AG04449 (cell line): ENCODE measurements at regions of chr15 and their contacts with region 1.

Region 1: DNA sequence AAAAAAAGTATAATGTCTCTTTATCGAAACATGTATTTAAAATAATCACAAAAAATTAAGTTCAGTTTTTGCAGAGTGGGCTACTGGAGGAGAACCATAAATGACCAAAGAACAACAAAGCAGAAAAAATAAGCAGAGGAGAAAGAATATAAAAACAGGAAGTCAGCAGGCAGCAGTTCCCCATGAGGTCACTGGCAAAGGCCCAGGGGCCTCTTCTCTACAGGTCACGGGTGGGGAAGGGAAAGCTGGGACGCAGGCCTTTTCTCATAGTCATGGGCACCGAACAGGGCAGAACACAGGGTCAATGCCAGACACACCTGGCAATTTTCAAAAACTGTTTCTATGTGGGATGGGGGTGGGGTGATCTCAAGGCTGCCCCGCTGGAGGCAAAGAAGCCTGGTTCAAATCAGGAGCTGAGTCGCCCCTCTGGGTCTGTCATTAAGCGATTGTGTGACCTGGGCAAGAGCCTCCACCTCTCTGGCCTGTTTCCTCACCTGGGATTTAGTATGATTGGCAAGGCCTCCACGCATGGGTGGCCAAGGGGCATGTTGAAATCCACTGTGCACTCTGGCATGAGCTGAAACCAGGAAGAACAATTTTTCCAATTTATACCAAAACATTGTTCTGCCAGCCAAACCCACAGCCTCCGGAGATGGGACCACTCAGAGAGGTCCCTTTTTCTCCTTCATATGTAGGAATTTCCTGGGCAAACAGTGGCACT is 43.8 kb upstream of the UACA start:
- DNase-seq: no peak
- H3K4me3 ChIP-seq: no peak overlapping the region
- CTCF ChIP-seq: no peak

Region 2: DNA sequence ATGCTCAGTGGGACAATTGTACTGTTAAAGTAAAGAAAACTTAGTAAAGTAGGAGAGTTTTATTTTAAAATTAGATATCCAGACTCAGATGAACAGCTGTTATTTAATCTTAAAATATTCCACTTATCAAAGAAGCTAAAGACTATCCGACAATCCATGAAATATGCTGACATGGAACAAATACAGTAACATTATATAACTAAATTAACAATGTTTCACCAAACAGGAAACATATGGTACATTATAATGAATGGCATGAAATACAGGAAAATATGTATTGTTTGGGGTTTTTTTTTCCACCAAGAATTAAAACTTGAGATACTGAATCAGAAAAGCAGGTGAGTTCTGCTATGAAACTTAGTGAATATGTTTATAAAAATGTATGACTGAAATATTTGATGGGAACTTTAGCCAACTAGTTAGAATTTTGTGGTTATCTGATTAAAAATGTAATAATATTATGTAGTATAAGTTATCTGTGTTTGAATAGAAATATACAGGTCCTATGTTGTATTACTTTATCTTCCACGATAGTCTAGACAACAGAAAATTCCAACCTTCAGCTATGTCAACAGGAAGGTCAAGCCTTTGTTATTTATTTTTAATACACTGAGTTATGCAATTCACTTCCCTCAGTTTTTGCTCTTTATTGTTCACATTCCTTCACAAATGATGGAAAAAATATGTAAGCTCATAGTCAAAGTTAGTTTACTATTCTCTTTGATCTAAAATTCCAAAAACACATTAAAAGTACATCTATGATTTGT is 116.5 kb before region 1 on chr15:
- CTCF ChIA-PET with region 1: interaction called, 27 read pairs
- POLR2A ChIA-PET with region 1: no interaction called
- DNase-seq: no peak
- H3K4me3 ChIP-seq: no peak overlapping the region
- CTCF ChIP-seq: no peak

Region 3: DNA sequence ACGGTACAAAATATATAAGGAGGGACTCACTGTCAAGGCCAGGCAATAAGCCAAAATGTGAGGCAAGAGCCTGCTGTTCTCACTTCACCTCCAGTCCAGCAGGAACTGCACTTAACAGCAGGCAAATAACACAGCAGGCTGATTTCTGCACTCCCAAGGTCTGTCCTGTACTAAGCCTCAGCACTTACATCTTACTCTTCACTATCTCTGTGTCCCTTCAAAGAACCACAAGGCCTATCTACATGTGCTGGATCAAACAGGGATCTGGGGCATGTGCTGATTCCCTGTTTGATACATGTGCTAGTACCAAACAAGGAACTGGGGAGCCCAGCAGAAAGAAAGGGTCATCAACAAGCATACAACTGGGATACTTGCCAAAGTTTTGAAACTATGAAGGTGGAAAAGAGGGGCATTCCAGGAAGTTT is 66.0 kb before region 1 on chr15:
- CTCF ChIA-PET with region 1: interaction called, 10 read pairs
- POLR2A ChIA-PET with region 1: no interaction called
- DNase-seq: peak; percentile 63
- H3K4me3 ChIP-seq: no peak overlapping the region
- CTCF ChIP-seq: no peak

Region 4: GRCh38 chr15:70762469-70763119 is 44.6 kb before region 1 on chr15:
- CTCF ChIA-PET with region 1: interaction called, 34 read pairs
- POLR2A ChIA-PET with region 1: no interaction called
- DNase-seq: no peak
- H3K4me3 ChIP-seq: peak overlapping the region; percentile 77
- CTCF ChIP-seq: no peak

Region 5: GRCh38 chr15:70833897-70834765 is 27.0 kb after region 1 on chr15:
- CTCF ChIA-PET with region 1: interaction called, 27 read pairs
- POLR2A ChIA-PET with region 1: no interaction called
- DNase-seq: no peak
- H3K4me3 ChIP-seq: no peak overlapping the region
- CTCF ChIP-seq: no peak

Region 6: DNA sequence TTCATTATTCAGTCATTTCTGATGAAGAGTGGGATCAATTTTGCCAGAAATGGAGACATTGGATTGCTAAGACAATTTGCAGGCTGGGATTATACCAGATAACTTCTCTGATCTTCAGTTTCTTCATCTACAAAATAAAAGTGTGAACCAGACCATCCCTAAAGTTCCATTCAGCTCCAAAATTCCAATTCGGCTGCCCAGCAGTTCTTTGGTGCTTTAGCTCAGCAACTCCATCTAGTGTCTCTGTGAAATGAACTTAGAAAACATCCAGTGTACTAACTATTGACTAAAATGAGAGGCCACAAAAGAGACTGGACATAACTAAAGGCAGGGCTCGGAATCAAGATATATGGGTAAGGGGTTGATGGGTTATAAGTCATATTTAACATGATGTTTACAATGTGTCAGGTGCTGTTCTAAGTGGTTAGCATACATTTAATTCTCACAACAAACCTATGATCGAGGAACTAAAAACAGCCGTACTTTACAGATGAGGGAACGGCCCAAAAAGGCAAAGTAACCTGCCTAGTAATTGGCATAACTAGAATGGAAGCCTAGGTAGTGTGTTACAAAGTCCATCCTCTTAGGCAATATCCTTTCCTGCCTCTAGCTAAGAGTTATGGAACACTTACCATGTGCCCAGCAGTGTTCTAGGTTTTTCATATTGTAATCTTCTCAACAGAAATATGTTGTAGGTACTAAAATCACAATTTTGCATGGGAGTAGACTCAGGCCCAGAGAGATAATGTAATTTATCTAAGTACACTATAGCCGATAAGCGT is 68.0 kb after region 1 on chr15:
- CTCF ChIA-PET with region 1: interaction called, 24 read pairs
- POLR2A ChIA-PET with region 1: interaction called, 4 read pairs
- DNase-seq: no peak
- H3K4me3 ChIP-seq: no peak overlapping the region
- CTCF ChIP-seq: peak; percentile 54